ENCODE measurements at regions of chr6 and their contacts with region 1.

Region 1: DNA sequence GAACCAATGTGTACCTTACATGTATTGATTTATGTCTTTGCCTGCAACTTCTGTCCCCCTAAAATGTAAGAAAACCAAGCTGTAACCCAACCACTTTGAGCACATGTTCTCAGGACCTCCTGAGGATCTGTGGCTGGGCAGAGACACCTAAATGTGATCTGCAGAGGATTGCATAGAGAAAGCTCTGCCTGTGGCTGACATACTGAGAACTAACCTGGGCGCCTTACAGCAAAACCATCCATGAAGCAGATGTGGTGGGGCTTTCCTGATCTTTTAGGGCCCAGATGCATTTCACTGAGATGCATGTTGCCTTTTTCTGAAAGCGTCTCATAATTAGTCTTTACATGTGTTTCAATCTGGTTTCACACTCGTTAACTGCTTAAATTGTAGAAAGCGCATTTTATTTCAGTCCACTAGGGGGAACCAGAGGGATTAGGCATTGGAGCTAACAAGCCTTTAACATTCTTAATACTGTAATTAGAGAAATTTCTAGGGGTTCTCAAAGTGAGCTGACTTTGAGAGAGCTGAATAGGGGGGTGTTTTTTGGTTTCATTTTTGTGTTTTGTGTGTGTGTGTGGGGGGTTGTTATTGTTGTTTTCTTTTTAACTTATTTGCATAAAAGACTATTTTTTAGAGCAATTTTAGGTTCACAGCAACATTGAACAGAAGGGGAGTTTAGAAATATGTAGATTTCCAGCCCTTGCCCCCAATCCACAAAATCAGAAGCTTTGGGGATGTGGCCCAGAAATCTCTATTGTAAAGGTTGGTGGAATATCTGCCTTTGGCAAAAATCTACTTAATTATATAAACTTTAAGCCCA is 50.9 kb upstream of the FAM184A start:
- DNase-seq: peak; percentile 57
- H3K4me3 Mint-ChIP-seq: no peak overlapping the region
- H3K27ac Mint-ChIP-seq: no peak overlapping the region
- H3K4me1 Mint-ChIP-seq: peaks cover 3% of the 10 kb centered on the region
- H3K27me3 Mint-ChIP-seq: peaks cover 7% of the 10 kb centered on the region

Region 2: GRCh38 chr6:119110601-119111548 is 18.5 kb before region 1 on chr6:
- CTCF ChIA-PET with region 1: interaction called, 10 read pairs
- POLR2A ChIA-PET with region 1: no interaction called
- DNase-seq: peak; percentile 66
- H3K4me3 Mint-ChIP-seq: no peak overlapping the region
- H3K27ac Mint-ChIP-seq: no peak overlapping the region
- H3K4me1 Mint-ChIP-seq: peaks cover 17% of the 10 kb centered on the region
- H3K27me3 Mint-ChIP-seq: no peaks in the 10 kb centered on the region

Region 3: DNA sequence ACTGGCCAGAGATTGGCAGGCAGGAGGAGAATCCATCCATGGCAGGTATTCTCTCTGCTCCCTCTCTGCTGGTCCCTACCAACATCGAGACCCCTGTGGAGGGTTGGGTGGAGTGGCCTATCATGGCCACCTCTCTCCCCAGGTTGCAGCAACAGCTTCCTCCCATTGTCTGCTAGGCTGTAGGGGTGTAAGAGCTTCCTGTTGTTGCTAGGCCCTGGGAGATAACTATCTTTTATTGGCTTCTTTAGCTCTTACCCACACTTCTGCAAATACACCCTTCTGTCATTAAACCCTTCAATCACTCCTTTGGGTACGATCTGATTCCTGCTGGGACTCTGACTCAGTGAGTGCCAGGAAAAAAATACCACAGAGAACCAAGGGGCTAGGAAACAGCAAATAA is 15.8 kb after region 1 on chr6:
- CTCF ChIA-PET with region 1: interaction called, 14 read pairs
- POLR2A ChIA-PET with region 1: no interaction called
- DNase-seq: peak; percentile 14
- H3K4me3 Mint-ChIP-seq: no peak overlapping the region
- H3K27ac Mint-ChIP-seq: peak overlapping the region; percentile 77
- H3K4me1 Mint-ChIP-seq: peaks cover 33% of the 10 kb centered on the region
- H3K27me3 Mint-ChIP-seq: peaks cover 4% of the 10 kb centered on the region

Measured in activated CD4-positive, alpha-beta T cell treated with anti-CD3 and anti-CD28 coated beads, Interleukin-2, amount 10 ng/mL, durations not matched to agents 7 days and 5 days (primary cell).